ENCODE measurements at regions of chr5 and their contacts with region 1.

Region 1: DNA sequence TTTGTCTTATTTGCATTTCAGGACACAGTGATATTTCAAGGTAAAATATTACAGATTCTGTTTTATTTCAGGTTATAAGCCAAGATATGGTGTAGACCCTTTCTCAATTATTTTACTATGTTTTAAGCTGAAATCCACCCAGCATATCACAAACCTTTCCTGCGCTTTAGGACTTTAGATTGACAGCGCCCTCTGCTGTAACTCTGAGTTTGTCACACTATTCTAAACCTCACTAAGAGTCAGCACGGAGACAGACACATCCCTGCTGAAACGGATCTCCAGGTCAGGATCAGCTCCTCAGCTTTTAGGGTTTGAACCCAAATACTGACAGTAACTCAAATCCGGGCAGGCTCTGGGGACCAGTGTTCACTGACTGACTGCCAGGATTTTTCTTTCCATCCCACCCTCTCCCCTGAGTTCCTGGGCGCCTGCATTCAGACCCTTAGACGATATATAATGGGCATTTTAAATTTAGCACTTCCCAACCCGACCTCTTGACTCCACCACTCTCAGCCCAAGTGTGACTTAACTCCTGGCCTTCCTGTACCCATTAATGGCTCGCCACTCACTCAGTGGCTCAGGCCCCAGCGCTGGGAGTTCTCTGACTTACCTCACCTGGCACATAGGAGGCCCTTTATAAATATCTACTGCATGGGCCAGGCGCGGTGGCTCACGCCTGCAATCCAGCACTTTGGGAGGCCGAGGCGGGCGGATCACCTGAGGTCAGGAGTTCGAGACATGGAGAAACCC is 33.5 kb downstream of the TLX3 start:
- DNase-seq: peak; percentile 40
- H3K4me3 Mint-ChIP-seq: no peak overlapping the region
- H3K27ac Mint-ChIP-seq: no peak overlapping the region
- H3K4me1 Mint-ChIP-seq: no peaks in the 10 kb centered on the region
- H3K27me3 Mint-ChIP-seq: peaks cover 14% of the 10 kb centered on the region

Region 2: DNA sequence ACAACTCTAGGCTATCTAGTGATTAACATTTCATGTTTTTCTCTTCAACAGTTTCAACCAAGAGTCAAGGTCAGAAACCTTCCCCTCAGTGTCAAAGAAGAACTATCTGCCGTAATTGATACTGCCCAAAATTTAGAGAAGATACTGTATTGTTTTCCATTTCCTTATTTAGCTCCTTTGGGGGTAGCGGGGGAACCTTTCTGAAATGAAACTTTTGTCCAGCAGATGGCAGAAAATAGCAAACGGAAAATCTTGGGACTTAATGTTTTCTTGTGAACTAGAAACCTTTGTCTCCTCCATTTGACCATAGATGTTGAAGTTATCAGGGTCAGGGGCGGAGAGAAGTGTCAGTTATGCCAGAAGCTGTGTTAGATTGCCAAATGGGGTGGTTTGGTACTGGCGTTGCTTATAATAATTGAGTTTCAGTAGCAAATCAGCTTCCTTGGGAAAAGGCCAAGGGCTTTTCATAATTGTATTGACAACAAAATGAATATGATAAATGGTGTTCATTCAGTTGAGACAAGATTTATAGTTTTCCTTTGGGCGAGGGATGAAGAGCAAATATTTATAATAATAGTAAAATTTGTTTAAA is 135.2 kb before region 1 on chr5:
- CTCF ChIA-PET with region 1: interaction called, 72 read pairs
- POLR2A ChIA-PET with region 1: no interaction called
- intact Hi-C with region 1: loop called (anchors 1 kb)
- DNase-seq: peak; percentile 9
- H3K4me3 Mint-ChIP-seq: no peak overlapping the region
- H3K27ac Mint-ChIP-seq: no peak overlapping the region
- H3K4me1 Mint-ChIP-seq: no peaks in the 10 kb centered on the region
- H3K27me3 Mint-ChIP-seq: peaks cover 4% of the 10 kb centered on the region

Region 3: DNA sequence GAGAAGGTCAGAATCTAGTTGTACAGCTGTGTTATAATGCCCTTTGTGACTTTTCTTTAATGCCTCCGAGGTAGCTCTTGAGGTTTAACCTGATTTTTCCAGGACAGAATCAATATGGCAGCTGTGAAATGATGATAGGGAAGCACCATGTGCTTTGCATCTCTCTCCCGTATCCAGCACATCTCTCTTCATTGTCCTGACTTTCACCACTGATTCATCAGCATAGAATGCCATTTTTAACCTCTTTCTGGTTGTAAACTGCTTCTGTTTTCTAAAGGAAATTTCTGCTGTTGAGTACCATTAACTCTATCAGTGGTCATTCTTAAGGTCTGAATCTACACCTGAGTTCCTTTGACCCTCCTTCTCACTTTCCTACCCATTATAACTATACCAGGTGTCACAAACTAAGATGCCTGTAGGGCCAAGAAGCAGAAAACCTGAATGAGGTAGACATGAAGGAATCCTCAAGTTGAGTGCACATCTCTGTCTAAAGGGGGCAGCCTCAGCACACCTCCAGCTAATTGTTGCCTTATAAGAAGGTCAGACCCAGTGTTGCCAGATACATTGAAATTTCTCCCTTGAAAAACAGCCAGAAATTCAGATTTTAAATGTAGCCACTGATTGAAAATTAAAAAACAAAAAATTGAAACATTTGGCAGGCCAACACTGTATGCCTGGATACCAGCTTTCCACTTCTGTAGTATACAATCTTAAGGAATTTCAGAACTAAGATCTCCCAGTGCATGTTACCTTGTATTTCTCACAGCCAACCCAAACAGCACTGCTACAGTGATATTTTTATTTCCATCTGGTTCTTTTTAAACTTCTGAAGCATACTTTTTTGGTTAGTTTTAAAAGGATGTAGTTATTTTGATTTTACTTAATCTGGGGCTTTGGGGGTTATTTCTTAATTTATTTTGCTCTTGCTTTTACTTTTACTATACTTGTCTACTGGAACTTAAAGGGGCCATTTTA is 69.3 kb before region 1 on chr5:
- CTCF ChIA-PET with region 1: interaction called, 10 read pairs
- POLR2A ChIA-PET with region 1: no interaction called
- intact Hi-C with region 1: loop called (anchors 1 kb)
- DNase-seq: peak; percentile 16
- H3K4me3 Mint-ChIP-seq: no peak overlapping the region
- H3K27ac Mint-ChIP-seq: no peak overlapping the region
- H3K4me1 Mint-ChIP-seq: no peaks in the 10 kb centered on the region
- H3K27me3 Mint-ChIP-seq: peaks cover 5% of the 10 kb centered on the region

Region 4: DNA sequence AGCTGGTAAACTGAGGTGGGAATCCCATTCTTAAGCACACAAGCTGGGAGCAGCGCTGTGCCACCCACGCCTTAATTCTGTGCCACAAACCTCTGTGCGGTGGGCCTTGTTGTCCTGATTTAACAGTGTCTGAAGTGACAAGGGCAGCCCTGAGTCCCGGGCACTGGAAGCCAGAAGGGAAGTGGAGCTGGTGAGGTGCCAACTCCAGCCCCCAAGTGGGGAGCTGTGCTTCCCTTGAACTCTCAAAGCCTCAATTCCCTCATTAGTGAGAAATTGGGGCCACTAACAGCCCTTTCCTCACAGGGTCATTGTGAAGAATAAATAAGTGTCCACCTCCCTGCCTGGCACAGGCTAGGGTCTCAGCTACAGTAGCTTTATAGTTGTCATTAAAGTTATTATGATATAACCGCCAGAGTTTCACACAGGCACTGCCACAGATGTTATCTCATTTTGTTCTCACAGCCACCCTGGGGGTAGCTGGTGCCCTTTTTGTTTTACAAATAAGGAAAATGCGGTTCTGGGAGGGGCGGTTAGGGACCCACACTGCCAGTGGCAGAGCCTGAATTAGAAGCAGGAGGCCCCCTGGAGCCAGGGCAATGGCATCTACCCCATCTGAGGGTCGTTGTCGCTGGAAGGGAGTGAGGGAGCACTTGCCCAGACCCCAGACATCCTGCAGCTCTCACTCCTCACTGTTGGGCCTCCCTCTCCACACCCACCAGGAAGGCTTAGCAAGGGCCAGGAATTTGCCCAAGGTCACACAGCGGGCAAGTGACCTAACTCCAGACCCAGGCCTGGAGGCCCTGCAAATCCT is 35.6 kb before region 1 on chr5:
- CTCF ChIA-PET with region 1: no interaction called
- POLR2A ChIA-PET with region 1: no interaction called
- intact Hi-C with region 1: no loop called
- DNase-seq: no peak
- H3K4me3 Mint-ChIP-seq: no peak overlapping the region
- H3K27ac Mint-ChIP-seq: no peak overlapping the region
- H3K4me1 Mint-ChIP-seq: peaks cover 13% of the 10 kb centered on the region
- H3K27me3 Mint-ChIP-seq: peaks cover 57% of the 10 kb centered on the region

Region 5: GRCh38 chr5:171450423-171451331 is 108.1 kb after region 1 on chr5:
- CTCF ChIA-PET with region 1: no interaction called
- POLR2A ChIA-PET with region 1: no interaction called
- intact Hi-C with region 1: no loop called
- DNase-seq: peak; percentile 42
- H3K4me3 Mint-ChIP-seq: no peak overlapping the region
- H3K27ac Mint-ChIP-seq: no peak overlapping the region
- H3K4me1 Mint-ChIP-seq: no peaks in the 10 kb centered on the region
- H3K27me3 Mint-ChIP-seq: peaks cover 39% of the 10 kb centered on the region